Activated naive CD8-positive, alpha-beta T cell treated with anti-CD3 and anti-CD28 coated beads, Interleukin-2, amount 10 ng/mL, durations not matched to agents 7 days and 5 days (primary cell): ENCODE measurements at regions of chr1 and their contacts with region 1.

Region 1: DNA sequence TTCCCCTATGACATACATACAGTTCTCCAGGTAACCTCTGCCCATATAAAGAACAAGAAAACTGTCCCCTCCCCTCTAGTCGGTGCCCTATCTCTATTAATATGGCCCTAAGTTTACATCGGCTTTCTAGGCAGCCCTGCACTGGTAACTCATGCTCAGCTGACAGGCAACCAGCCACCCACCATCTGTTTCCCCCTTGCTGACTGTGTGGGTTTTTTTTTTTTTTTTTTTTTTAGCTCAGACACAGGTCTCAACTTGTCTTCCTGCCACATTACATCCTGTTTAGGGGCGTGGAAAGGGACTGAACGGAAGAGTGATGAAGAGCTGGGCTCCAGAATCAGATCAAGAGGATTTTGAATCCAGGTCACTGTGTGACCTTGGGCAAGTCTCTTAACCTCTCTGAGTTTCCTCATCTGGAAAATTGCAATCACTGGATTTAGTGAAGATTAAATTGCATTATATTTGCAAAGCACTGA is 14.0 kb downstream of the LAPTM5 start:
- DNase-seq: no peak
- ATAC-seq: peak; percentile 75
- H3K4me3 Mint-ChIP-seq: peak overlapping the region; percentile 86
- H3K27ac Mint-ChIP-seq: peak overlapping the region; percentile 96
- H3K4me1 Mint-ChIP-seq: peaks cover 88% of the 10 kb centered on the region
- H3K27me3 Mint-ChIP-seq: no peaks in the 10 kb centered on the region

Region 2: GRCh38 chr1:30756545-30757195 is 13.0 kb after region 1 on chr1:
- POLR2A ChIA-PET with region 1: interaction called, 284 read pairs
- DNase-seq: peak; percentile 67
- ATAC-seq: peak; percentile 61
- H3K4me3 Mint-ChIP-seq: peak overlapping the region; percentile 99
- H3K27ac Mint-ChIP-seq: peak overlapping the region; percentile 99
- H3K4me1 Mint-ChIP-seq: peaks cover 75% of the 10 kb centered on the region
- H3K27me3 Mint-ChIP-seq: no peaks in the 10 kb centered on the region